ENCODE measurements at regions of chr12 and their contacts with region 1.

Region 1: DNA sequence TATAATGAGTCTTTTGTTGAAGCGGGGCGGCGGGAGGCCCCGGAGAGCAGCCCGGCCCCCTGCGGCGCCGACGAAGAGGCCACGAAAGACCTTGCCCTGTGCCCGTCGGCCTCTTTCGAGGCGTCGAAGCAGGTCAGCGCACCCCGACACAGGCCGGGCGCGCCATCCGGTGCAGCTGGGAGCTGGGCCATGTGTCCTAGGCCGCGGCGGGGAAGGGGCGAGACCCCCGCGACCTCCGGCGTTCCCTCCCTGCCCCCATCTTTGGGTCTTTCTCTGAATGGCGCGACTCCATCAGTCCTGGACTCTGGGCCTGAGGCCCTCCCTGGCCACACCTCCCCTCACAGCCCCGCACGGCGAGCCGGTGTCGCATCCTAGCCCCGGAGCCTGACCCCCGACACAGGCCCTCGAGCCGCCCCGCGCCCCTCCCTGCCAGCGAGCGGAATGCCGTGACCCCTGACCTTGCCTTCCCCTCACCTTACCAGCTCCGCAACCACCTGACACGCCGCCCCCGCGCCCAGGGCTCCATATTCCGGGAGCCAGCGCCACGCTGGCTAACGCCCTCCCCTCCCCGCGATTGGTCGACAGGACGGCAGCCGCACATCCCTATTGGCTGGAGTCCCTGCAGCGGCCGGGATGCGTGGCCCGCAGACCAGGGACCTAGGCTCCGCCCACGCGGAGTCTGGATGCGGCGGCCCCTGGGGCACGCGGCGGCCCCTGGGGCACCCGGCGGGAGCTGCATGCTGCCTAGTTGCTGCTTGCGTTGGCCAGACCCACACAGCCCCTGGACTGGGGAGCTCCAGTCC is at the start of gene SLC11A2:
- H3K4me3 Mint-ChIP-seq: peak within 1 kb of the TSS; percentile 80
- H3K27ac Mint-ChIP-seq: peak within 1 kb of the TSS; percentile 89
- H3K4me1 Mint-ChIP-seq: peaks cover 33% of the 10 kb centered on the region
- H3K27me3 Mint-ChIP-seq: peaks cover 2% of the 10 kb centered on the region

Region 2: DNA sequence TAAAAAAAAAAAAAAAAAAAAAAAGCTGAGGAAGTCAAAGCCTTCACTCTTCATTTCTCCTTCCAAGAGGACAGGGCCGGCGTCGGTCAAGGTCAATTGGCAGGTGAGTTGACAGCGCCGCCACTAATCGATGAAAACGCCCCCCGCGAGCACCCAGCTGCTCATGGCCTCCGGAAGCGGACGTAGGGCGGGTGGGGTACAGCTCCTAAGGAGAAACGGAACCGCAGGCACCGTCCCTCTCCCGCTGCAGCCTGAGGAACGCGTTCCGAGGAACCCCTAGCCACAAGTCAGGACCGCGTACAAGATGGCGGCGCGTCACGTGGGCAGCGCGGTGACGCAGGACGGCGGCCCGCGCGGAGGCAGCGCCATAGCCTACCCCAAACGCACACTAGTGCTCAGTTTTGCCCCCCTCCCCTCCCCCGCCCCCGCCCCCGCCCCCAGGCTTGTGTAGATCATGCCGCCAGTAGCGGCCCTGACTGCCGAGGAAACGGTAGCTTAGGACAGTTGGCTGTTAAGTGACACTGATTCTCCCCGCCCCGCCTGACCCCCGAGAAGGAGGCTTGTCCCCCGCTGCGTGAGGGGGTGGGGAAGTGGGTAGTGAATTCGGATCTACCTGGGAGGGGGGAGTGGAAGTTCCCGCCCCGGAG is 262.3 kb before region 1 on chr12 and contains the start of gene ATF1:
- intact Hi-C with region 1: loop called (anchors 5 kb)
- H3K4me3 Mint-ChIP-seq: peak within 1 kb of the TSS; percentile 95
- H3K27ac Mint-ChIP-seq: peak within 1 kb of the TSS; percentile 98
- H3K4me1 Mint-ChIP-seq: peaks cover 45% of the 10 kb centered on the region
- H3K27me3 Mint-ChIP-seq: no peaks in the 10 kb centered on the region

Region 3: GRCh38 chr12:50825372-50825838 is 200.6 kb before region 1 on chr12:
- intact Hi-C with region 1: loop called (anchors 5 kb)
- H3K4me3 Mint-ChIP-seq: no peak overlapping the region
- H3K27ac Mint-ChIP-seq: no peak overlapping the region
- H3K4me1 Mint-ChIP-seq: peaks cover 14% of the 10 kb centered on the region
- H3K27me3 Mint-ChIP-seq: no peaks in the 10 kb centered on the region

Region 4: DNA sequence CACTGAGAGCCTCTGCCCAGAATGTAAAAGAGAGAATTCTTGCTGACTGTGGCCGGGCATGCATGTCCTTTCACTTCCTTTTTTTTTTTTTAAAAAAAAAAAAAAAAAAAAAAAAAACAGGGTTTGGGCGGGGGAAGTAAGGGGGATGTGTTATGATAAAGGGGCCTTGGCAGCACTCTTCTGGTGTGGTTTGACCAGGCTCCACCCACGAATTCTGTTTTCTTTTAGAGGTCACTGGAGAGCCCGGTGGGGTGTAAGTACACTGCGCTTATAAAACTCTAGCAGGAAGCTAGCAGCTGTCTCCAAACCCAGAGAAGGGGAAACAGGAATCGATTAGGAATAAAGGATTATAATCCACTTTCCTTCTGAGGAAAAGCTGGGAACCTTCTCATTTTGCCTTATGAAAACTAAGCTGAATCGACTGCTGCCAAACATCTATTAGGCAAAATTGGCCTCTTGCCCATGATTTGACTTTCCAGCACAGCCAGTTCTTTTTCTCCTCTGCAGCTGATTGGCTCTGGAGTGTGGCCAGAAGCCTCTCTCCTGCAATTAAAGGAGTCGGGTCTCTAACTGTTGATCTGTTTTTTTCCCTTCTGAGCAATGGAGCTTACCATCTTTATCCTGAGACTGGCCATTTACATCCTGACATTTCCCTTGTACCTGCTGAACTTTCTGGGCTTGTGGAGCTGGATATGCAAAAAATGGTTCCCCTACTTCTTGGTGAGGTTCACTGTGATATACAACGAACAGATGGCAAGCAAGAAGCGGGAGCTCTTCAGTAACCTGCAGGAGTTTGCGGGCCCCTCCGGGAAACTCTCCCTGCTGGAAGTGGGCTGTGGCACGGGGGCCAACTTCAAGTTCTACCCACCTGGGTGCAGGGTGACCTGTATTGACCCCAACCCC is 101.3 kb before region 1 on chr12:
- intact Hi-C with region 1: loop called (anchors 5 kb)
- H3K4me3 Mint-ChIP-seq: peak overlapping the region; percentile 99
- H3K27ac Mint-ChIP-seq: peak overlapping the region; percentile 97
- H3K4me1 Mint-ChIP-seq: peaks cover 38% of the 10 kb centered on the region
- H3K27me3 Mint-ChIP-seq: no peaks in the 10 kb centered on the region

Region 5: DNA sequence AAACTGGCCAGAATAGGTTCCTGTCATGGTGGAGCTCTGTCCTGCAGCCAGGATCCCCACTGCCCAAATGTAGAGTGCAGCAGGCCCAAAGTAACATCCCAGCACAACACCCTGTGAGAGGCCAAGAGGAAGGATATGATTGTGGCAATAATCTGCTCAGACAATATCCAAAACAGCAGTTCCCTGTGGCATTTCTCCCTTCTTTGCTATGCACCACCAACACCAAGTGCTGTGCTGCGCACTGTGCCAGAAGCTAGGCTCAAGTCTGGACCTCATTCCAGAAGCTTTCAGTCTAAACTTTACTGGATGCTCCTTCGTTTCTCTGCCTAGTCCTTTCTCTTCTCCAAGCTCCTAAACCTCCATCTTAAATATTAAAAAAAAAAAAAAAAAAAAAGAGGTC is 33.2 kb before region 1 on chr12:
- intact Hi-C with region 1: loop called (anchors 5 kb)
- H3K4me3 Mint-ChIP-seq: no peak overlapping the region
- H3K27ac Mint-ChIP-seq: no peak overlapping the region
- H3K4me1 Mint-ChIP-seq: peaks cover 28% of the 10 kb centered on the region
- H3K27me3 Mint-ChIP-seq: no peaks in the 10 kb centered on the region

Region 6: DNA sequence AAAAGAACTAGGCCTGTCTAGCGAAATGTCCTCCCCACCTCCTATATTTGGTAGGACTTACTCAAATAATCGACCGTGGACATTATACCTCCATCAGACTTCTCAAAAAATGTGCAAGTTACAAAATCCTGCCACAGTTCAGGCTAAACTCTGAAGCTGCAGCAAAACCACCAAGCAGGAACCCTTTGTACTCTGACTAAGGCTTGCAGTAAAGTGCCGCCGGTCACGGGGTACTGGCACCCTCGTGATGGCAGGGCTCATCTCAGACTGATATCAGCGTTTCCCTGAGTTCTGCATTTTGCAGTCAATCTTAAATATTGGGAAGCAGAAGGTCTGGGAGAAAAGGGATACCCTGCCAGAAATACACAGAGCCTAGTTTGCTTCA is 17.0 kb before region 1 on chr12:
- intact Hi-C with region 1: loop called (anchors 2 kb)
- H3K4me3 Mint-ChIP-seq: peak overlapping the region; percentile 87
- H3K27ac Mint-ChIP-seq: peak overlapping the region; percentile 96
- H3K4me1 Mint-ChIP-seq: peaks cover 82% of the 10 kb centered on the region
- H3K27me3 Mint-ChIP-seq: no peaks in the 10 kb centered on the region

Measured in dendritic cell treated with granulocyte-macrophage colony-stimulating factor and Interleukin-4, amounts not matched to agents 40 ng/mL and 50 ng/mL, for 4 days (primary cell).